ENCODE measurements at regions of chr4 and their contacts with region 1.

Region 1: DNA sequence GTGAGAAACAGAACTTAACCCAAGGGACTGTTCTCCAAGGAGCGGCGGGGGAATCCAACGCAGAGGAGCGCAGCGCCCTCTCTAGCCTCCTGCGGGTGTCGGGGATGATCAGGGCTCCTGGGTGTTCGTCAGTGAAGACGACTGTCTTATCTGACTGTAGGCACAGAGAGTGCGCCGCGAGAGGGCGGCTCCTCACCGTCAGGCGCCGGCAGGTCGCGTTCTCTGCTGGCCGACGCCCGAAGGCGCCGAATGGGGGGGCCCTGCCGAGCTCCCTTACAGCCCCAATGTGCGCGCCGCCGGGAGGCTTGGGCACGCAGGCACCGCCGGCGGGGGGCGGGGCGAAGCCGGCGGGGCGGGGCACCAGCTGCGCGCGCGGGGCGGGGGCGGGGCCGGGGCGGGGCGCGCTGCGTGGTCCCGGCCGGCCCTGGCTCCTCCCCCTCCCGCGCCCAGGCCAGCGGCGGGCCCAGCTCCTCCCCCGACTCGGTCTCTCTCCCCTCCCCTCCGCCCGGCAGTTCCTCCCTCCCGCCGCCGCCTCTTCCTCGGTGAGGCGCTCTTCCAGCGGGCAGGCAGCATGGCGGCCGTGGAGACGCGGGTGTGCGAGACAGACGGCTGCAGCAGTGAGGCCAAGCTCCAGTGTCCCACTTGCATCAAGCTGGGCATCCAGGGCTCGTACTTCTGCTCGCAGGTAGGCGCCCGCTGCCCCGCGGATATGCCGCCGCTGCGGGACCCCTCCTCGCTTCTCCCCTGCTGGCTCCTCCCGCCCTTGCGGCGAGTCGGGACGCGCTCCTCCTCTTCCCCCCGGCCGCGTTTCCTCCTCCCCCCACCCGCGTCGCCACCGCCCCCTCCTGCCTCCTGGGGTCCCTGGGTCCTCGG is at the start of gene METAP1:
- DNase-seq: peak; percentile 97
- ATAC-seq: peak; percentile 96
- H3K4me3 Mint-ChIP-seq: peak within 1 kb of the TSS; percentile 88
- H3K27ac Mint-ChIP-seq: peak within 1 kb of the TSS; percentile 99
- H3K4me1 Mint-ChIP-seq: peaks cover 35% of the 10 kb centered on the region
- H3K27me3 Mint-ChIP-seq: no peaks in the 10 kb centered on the region
- total RNA-seq, gene METAP1: 47.3 to 58.7 TPM

Region 2: GRCh38 chr4:98150092-98150761 is 845.2 kb before region 1 on chr4:
- CTCF ChIA-PET with region 1: interaction called, 14 read pairs
- POLR2A ChIA-PET with region 1: no interaction called
- DNase-seq: no peak
- ATAC-seq: no peak
- H3K4me3 Mint-ChIP-seq: no peak overlapping the region
- H3K27ac Mint-ChIP-seq: no peak overlapping the region
- H3K4me1 Mint-ChIP-seq: peaks cover 23% of the 10 kb centered on the region
- H3K27me3 Mint-ChIP-seq: peaks cover 6% of the 10 kb centered on the region

Region 3: DNA sequence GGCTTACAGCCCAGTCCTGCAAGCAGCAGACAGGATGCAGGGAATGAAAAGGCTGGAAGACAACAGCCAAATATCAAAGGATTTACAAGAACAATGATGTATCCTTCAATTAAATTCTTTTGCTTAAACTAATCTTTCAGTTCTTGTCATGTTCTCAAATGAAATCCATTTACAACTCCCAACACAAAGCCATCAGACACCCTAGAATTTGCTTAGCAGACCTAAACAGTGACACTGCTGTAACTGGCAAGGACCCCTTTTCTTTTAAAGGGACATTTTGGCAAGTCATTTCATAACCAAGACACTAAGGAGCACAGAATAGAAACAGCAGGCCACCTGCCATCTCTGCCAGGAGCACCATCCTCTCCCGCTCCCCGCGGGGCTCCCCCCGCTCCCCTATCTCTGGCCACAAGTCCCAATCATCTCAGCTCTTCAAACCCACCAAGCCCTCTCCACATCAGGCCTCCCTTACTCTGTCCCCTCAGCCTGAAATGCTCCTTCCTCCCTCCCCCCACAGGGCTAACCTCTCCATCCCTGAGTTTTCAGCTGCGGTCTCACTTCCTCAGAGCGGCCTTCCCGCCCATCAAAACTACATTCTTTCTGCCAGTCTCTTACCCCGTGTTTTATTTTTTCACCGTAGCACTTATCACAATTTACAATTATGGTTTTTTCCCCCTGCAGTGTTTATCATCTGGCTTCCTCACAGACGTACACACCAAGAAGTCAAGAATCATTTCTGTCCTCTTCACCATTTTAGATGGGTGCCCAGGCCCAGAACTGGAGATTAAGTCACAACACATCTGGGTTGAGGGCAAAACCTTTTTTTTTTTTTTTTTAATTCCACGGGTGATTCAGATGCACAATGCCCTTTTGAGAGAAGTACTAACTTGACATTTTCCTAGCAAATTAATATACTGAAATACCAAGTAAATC is 382.8 kb before region 1 on chr4:
- CTCF ChIA-PET with region 1: no interaction called
- POLR2A ChIA-PET with region 1: no interaction called
- DNase-seq: no peak
- ATAC-seq: no peak
- H3K4me3 Mint-ChIP-seq: no peak overlapping the region
- H3K27ac Mint-ChIP-seq: peak overlapping the region; percentile 48
- H3K4me1 Mint-ChIP-seq: peaks cover 42% of the 10 kb centered on the region
- H3K27me3 Mint-ChIP-seq: no peaks in the 10 kb centered on the region

Region 4: GRCh38 chr4:98928505-98929340 is 66.7 kb before region 1 on chr4 and contains the start of gene EIF4E:
- CTCF ChIA-PET with region 1: interaction called, 40 read pairs
- POLR2A ChIA-PET with region 1: interaction called, 30 read pairs
- DNase-seq: peak; percentile 98
- ATAC-seq: peak; percentile 81
- H3K4me3 Mint-ChIP-seq: peak within 1 kb of the TSS; percentile 90
- H3K27ac Mint-ChIP-seq: peak within 1 kb of the TSS; percentile 96
- H3K4me1 Mint-ChIP-seq: peaks cover 46% of the 10 kb centered on the region
- H3K27me3 Mint-ChIP-seq: no peaks in the 10 kb centered on the region
- total RNA-seq, gene EIF4E: 103 to 105 TPM

Region 5: DNA sequence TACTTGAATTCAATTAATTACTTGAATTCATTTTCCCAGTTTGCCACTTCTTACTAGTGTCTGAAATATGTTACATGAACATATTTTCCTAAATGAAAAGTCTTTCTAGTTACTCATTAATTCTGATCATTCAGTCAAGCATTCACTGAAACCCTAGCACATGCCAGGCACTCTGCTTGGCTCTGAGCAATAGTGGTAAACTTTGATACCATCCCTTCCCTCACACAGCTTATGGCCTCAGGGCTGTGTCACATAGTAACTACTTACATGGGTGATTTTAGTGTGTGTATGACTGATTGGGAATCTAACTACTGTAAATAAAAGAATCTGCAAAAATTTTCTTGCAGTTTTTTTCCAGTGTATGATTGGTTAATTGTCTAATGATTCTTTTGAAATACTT is 32.8 kb after region 1 on chr4:
- CTCF ChIA-PET with region 1: interaction called, 14 read pairs
- POLR2A ChIA-PET with region 1: no interaction called
- DNase-seq: no peak
- ATAC-seq: no peak
- H3K4me3 Mint-ChIP-seq: no peak overlapping the region
- H3K27ac Mint-ChIP-seq: no peak overlapping the region
- H3K4me1 Mint-ChIP-seq: peaks cover 16% of the 10 kb centered on the region
- H3K27me3 Mint-ChIP-seq: no peaks in the 10 kb centered on the region

Region 6: DNA sequence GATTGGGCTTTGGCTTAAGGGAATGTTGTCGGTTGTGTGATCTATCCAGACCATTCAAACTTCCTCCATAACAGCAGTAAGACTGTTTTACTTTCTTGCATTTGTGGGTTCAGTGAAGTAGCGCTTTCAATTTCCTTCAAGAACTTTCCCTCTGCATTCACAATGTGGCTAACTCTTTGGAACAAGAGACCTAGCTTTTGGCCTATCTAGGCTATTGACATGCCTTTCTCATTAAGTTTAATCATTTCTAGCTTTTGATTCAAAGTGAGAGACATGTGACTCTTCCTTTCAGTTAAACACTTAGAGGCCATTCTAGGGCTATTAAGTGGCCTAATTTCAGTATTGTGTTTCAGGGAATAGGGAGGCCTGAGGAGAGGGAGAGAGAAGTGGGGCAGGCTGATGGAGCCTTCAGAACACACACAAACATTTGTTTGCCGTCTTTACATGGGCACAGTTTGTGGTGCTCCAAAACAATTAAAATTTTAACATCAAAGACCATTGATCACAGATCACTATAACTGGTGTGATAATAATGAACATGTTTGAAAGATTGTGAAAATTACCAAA is 59.1 kb after region 1 on chr4:
- CTCF ChIA-PET with region 1: interaction called, 261 read pairs
- POLR2A ChIA-PET with region 1: interaction called, 17 read pairs
- DNase-seq: no peak
- ATAC-seq: no peak
- H3K4me3 Mint-ChIP-seq: no peak overlapping the region
- H3K27ac Mint-ChIP-seq: no peak overlapping the region
- H3K4me1 Mint-ChIP-seq: peaks cover 32% of the 10 kb centered on the region
- H3K27me3 Mint-ChIP-seq: no peaks in the 10 kb centered on the region

Region 7: DNA sequence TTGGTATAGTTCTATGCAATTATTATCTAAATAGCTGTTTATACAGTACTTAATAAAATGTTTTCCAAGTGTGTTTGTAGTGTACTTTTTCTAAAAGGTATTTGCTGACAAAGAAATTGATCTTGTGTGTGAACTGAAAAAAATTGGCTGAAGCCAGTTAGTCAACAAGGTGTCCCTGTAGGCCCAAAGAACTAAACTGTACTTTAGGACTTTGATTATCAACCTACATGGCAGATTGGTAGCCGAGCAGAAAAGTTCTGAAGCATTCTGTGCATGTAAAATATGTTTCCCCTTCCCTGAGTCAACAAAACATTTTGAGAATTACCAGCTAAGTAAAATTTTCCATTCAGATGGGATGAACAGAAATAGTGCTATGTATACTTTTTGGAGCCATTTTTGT is 72.2 kb after region 1 on chr4:
- CTCF ChIA-PET with region 1: interaction called, 16 read pairs
- POLR2A ChIA-PET with region 1: no interaction called
- DNase-seq: no peak
- ATAC-seq: no peak
- H3K4me3 Mint-ChIP-seq: no peak overlapping the region
- H3K27ac Mint-ChIP-seq: no peak overlapping the region
- H3K4me1 Mint-ChIP-seq: no peaks in the 10 kb centered on the region
- H3K27me3 Mint-ChIP-seq: no peaks in the 10 kb centered on the region

Region 8: DNA sequence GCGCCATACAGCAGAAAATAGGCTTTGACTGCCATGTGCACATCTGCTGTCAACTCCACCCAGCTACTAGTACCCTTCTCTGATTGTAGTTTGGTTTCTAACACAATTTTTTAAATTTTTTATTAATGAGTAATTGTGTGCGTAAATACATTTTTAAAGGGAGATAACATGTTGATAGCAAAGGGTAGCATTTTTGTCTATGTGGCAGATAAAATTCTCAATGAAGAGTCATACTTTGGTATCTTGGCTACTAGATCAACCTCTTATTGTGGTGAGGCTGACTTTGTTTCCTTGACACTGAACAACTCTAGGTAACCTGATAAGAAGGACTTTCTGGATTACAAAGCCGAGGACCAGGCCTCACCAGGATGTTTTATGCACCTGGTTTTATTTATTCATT is 139.2 kb after region 1 on chr4:
- CTCF ChIA-PET with region 1: no interaction called
- POLR2A ChIA-PET with region 1: no interaction called
- DNase-seq: no peak
- ATAC-seq: no peak
- H3K4me3 Mint-ChIP-seq: no peak overlapping the region
- H3K27ac Mint-ChIP-seq: no peak overlapping the region
- H3K4me1 Mint-ChIP-seq: no peaks in the 10 kb centered on the region
- H3K27me3 Mint-ChIP-seq: peaks cover 2% of the 10 kb centered on the region

Region 9: GRCh38 chr4:99405433-99406115 is 410.2 kb after region 1 on chr4:
- CTCF ChIA-PET with region 1: interaction called, 35 read pairs
- POLR2A ChIA-PET with region 1: no interaction called
- DNase-seq: peak; percentile 68
- ATAC-seq: peak; percentile 71
- H3K4me3 Mint-ChIP-seq: no peak overlapping the region
- H3K27ac Mint-ChIP-seq: no peak overlapping the region
- H3K4me1 Mint-ChIP-seq: peaks cover 19% of the 10 kb centered on the region
- H3K27me3 Mint-ChIP-seq: peaks cover 8% of the 10 kb centered on the region